WTC11 (cell line): ENCODE measurements at regions of chr9 and their contacts with region 1.

Region 1: DNA sequence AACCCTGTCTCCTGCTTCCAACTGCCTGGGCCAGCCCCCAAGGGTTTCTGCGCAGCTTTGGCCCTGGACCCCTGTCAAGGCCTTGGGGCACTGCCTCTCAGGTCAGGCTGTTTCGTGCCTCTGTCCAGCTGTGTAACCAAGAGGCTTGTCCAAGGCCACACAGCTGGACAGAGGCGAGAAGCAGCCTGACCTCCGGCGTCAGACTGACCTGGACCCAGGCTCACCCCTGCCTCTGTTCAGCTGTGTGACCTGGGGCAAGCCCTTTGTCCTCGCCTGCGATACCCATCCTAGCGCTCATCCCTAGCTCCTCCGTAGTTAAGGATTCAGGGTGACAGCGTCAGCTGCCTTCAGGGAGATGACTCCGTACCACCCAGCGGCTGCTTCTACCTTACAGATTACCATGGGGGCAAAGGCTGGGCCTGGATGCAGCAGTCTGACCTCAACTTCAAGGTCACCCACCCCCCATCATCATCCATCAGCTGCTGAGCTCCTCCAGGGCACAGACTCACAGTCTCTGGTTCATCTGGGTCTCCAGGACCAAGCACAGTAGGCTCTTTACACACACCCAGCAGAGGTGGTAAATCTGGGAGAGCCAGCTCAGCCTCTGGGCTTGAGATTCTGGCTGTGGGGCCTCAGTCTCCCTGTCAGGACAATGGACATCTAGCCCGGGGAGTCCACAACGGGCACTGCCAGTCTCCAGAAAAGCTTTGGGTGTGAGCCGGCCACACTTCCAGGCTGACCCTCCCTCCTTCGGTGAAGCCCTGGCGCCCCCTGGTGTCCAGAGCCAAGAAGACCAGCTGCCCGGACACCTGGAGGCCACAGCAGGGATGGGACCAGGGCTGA is 7.9 kb downstream of the AK1 start:
- DNase-seq: peak; percentile 96
- ATAC-seq: peak; percentile 89
- H3K4me3 Mint-ChIP-seq: no peak overlapping the region
- H3K27ac Mint-ChIP-seq: no peak overlapping the region; the same call in 1 of the 2 replicates
- H3K4me1 Mint-ChIP-seq: peaks cover 10% of the 10 kb centered on the region
- H3K27me3 Mint-ChIP-seq: no peaks in the 10 kb centered on the region
- CTCF ChIP-seq: peak; percentile 92

Region 2: DNA sequence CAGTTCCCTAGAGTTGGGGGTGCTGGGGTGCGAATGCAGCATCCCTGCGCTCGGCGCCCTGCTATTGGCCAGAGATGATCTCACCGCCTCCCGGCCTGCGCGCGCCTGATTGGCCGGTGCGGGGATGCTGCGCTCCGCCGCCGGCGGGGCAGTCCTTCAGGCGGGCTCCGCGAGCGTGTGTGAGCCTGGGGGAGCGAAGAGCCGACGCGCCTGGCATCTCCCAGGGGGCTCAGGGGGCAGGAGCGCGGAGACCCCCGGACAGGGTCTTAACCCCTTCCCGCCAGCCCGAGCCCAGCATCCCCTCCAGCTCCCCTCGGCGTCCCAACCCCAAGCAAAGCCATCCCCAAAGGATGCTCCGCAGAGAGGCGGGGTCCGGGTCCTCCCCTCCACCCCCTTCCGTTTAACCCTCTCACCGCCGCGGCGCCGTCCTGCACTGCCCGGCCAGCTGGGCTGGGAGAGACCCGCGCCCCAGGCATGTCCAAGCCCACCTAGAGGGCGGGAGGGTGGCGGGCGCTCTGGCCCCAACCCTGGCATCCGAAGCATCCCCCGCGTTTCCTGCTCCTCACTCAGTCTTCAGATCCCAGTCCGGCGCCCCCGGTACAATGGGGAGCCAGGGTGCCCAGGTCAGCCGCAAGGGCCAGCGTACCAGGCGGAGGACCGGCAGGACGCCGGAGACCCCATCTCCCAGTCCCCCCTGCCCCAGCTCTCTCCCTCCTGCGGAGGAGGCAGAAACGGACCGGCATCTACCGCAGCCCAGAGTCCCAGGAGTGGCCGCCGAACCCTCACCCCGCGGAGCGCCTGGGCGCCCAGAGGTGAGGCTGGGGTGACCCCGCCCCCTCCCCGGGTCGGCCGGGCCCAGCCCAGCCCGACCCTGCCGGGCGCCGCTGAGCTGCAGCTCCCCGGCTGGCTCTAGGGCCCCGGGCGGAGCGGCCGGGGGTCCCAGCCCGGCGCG is 115.2 kb before region 1 on chr9:
- CTCF ChIA-PET with region 1: interaction called, 10 read pairs
- POLR2A ChIA-PET with region 1: no interaction called
- DNase-seq: peak; percentile 80
- ATAC-seq: peak; percentile 84
- H3K4me3 Mint-ChIP-seq: peak overlapping the region; percentile 68
- H3K27ac Mint-ChIP-seq: no peak overlapping the region
- H3K4me1 Mint-ChIP-seq: peaks cover 4% of the 10 kb centered on the region; the same call in 1 of the 2 replicates
- H3K27me3 Mint-ChIP-seq: peaks cover 58% of the 10 kb centered on the region
- CTCF ChIP-seq: no peak

Region 3: GRCh38 chr9:127785023-127785932 is 84.3 kb before region 1 on chr9:
- CTCF ChIA-PET with region 1: interaction called, 21 read pairs
- POLR2A ChIA-PET with region 1: interaction called, 3 read pairs
- DNase-seq: peak; percentile 90
- ATAC-seq: peak; percentile 34
- H3K4me3 Mint-ChIP-seq: peak overlapping the region; percentile 97
- H3K27ac Mint-ChIP-seq: no peak overlapping the region
- H3K4me1 Mint-ChIP-seq: peaks cover 20% of the 10 kb centered on the region
- H3K27me3 Mint-ChIP-seq: no peaks in the 10 kb centered on the region
- CTCF ChIP-seq: peak; percentile 95

Region 4: GRCh38 chr9:127809512-127810377 is 59.8 kb before region 1 on chr9:
- CTCF ChIA-PET with region 1: interaction called, 16 read pairs
- POLR2A ChIA-PET with region 1: no interaction called
- DNase-seq: peak; percentile 69
- ATAC-seq: peak; percentile 93
- H3K4me3 Mint-ChIP-seq: peak overlapping the region; percentile 45
- H3K27ac Mint-ChIP-seq: no peak overlapping the region
- H3K4me1 Mint-ChIP-seq: no peaks in the 10 kb centered on the region
- H3K27me3 Mint-ChIP-seq: no peaks in the 10 kb centered on the region
- CTCF ChIP-seq: no peak

Region 5: GRCh38 chr9:127854184-127854806 is 15.2 kb before region 1 on chr9 and contains the start of gene ENG:
- CTCF ChIA-PET with region 1: interaction called, 79 read pairs
- POLR2A ChIA-PET with region 1: interaction called, 3 read pairs
- DNase-seq: peak; percentile 62
- ATAC-seq: peak; percentile 91
- H3K4me3 Mint-ChIP-seq: no peak within 1 kb of the TSS
- H3K27ac Mint-ChIP-seq: no peak within 1 kb of the TSS
- H3K4me1 Mint-ChIP-seq: peaks cover 7% of the 10 kb centered on the region; the same call in 1 of the 2 replicates
- H3K27me3 Mint-ChIP-seq: no peaks in the 10 kb centered on the region
- CTCF ChIP-seq: no peak
- total RNA-seq, gene ENG: 3.7 to 4.4 TPM (median 4.2 TPM) in 3 replicates

Region 6: GRCh38 chr9:127916665-127917613 is 47.4 kb after region 1 on chr9 and contains the start of gene ST6GALNAC4:
- CTCF ChIA-PET with region 1: interaction called, 28 read pairs
- POLR2A ChIA-PET with region 1: no interaction called
- DNase-seq: peak; percentile 96
- ATAC-seq: peak; percentile 92
- H3K4me3 Mint-ChIP-seq: peak within 1 kb of the TSS; percentile 74
- H3K27ac Mint-ChIP-seq: peak within 1 kb of the TSS; percentile 60; the same call in 1 of the 2 replicates
- H3K4me1 Mint-ChIP-seq: peaks cover 19% of the 10 kb centered on the region
- H3K27me3 Mint-ChIP-seq: peaks cover 7% of the 10 kb centered on the region
- CTCF ChIP-seq: no peak
- total RNA-seq, gene ST6GALNAC4: 25.1 to 25.7 TPM (median 25.4 TPM) in 3 replicates

Region 7: DNA sequence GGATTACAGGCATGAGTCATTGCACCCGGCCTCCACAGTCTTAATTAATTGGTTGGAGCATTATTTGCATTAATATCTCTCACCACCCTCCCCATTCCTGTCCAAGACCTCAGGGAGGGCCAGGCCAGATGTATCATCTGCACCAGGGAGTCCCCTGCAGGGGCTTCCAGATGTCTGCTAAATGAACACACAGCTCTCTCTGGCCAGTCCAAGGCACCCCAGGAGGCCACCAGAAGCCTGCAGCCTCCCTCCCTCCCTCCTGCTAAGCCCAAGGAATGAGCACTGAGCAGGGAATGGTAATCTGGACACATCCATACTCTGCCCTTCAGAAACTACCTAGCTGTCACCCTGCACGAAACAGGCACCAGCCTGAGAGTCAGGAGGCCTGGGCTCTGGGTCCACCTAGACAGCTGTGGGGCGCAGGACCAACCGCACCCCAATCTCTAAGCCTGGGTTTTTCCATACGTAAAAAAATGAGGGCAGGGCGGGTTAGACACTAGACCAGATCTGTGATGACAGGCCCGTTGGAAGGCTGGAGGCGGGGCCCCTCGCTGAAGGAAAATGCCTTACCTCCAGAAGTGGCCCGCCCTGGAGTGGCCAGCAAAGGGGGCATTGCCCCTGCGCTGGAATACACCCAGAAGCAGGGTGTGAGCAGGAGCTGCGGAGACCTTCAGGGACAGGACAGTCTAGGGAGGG is 313.5 kb after region 1 on chr9:
- CTCF ChIA-PET with region 1: no interaction called
- POLR2A ChIA-PET with region 1: no interaction called
- DNase-seq: no peak
- ATAC-seq: no peak
- H3K4me3 Mint-ChIP-seq: no peak overlapping the region
- H3K27ac Mint-ChIP-seq: no peak overlapping the region
- H3K4me1 Mint-ChIP-seq: no peaks in the 10 kb centered on the region
- H3K27me3 Mint-ChIP-seq: no peaks in the 10 kb centered on the region
- CTCF ChIP-seq: no peak

Region 8: GRCh38 chr9:128358861-128359260 is 489.3 kb after region 1 on chr9:
- CTCF ChIA-PET with region 1: no interaction called
- POLR2A ChIA-PET with region 1: no interaction called
- DNase-seq: no peak
- ATAC-seq: no peak
- H3K4me3 Mint-ChIP-seq: no peak overlapping the region
- H3K27ac Mint-ChIP-seq: no peak overlapping the region
- H3K4me1 Mint-ChIP-seq: peaks cover 22% of the 10 kb centered on the region
- H3K27me3 Mint-ChIP-seq: peaks cover 27% of the 10 kb centered on the region
- CTCF ChIP-seq: no peak